Activated CD4-positive, alpha-beta T cell treated with anti-CD3 and anti-CD28 coated beads for 36 hours (primary cell): ENCODE measurements at regions of chr2 and their contacts with region 1.

Region 1: DNA sequence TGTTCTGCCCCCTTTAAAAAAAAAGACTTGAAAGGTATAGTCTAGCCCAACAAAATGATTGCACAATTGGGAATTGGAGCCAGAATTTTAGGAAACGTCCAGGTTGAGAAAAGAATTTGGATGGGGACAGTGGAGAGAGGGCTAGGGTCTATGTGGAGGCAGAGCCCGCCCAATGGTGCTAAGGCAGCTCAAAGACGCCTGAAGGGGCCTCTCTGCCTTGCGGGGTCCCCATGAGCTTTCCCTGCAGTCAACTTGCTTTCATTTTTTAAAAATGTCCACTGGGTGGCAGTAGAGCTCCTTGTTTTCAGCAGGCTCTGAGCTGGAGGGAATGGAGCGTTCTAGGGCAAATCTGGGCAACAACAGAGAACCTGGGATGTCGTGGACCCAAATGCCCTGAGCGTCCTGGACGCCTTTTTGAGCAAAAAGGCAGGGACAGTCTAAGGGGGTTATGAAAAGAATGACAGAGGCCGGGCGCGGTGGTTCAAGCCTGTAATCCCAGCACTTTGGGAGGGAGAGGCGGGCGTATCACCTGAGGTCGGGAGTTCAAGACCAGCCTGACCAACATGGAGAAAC is 40.2 kb upstream of the ITM2C start:
- DNase-seq: peak; percentile 62
- ATAC-seq: peak; percentile 87
- H3K4me3 Mint-ChIP-seq: peak overlapping the region; percentile 44
- H3K27ac Mint-ChIP-seq: no peak overlapping the region
- H3K4me1 Mint-ChIP-seq: peaks cover 5% of the 10 kb centered on the region
- H3K27me3 Mint-ChIP-seq: peaks cover 28% of the 10 kb centered on the region

Region 2: GRCh38 chr2:230842473-230842872 is 18.0 kb after region 1 on chr2:
- CTCF ChIA-PET with region 1: interaction called, 21 read pairs
- POLR2A ChIA-PET with region 1: interaction called, 3 read pairs
- intact Hi-C with region 1: no loop called
- DNase-seq: no peak
- ATAC-seq: no peak
- H3K4me3 Mint-ChIP-seq: no peak overlapping the region
- H3K27ac Mint-ChIP-seq: no peak overlapping the region
- H3K4me1 Mint-ChIP-seq: peaks cover 15% of the 10 kb centered on the region
- H3K27me3 Mint-ChIP-seq: peaks cover 9% of the 10 kb centered on the region

Region 3: DNA sequence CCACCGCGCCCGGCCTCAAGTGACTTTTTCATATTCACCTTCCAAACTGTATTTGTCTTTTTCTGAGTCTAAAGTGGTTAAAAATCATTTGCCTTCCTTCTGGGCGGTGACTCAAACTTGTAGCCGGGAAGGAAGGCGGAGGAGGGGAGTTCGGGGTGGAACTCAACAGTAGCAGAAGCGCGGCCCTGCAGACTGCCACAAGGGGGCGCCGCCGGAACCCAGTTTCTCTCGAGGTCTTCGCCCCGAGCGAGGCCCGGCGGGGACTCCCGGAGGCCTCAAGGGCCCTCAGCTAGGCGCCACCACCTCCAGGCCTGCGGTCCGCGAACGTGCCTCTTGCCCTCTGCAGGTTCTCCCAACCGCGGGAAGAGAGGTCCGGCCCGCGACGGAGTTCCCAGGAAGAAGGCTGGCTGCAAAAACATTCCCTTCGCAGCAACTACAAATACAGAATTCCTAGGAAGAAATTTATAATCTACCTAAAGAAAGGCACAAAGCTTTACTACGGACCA is 23.4 kb after region 1 on chr2:
- CTCF ChIA-PET with region 1: interaction called, 21 read pairs
- POLR2A ChIA-PET with region 1: no interaction called
- intact Hi-C with region 1: loop called (anchors 1 to 2 kb)
- DNase-seq: peak; percentile 98
- ATAC-seq: peak; percentile 97
- H3K4me3 Mint-ChIP-seq: no peak overlapping the region
- H3K27ac Mint-ChIP-seq: peak overlapping the region; percentile 47
- H3K4me1 Mint-ChIP-seq: peaks cover 18% of the 10 kb centered on the region
- H3K27me3 Mint-ChIP-seq: peaks cover 19% of the 10 kb centered on the region

Region 4: DNA sequence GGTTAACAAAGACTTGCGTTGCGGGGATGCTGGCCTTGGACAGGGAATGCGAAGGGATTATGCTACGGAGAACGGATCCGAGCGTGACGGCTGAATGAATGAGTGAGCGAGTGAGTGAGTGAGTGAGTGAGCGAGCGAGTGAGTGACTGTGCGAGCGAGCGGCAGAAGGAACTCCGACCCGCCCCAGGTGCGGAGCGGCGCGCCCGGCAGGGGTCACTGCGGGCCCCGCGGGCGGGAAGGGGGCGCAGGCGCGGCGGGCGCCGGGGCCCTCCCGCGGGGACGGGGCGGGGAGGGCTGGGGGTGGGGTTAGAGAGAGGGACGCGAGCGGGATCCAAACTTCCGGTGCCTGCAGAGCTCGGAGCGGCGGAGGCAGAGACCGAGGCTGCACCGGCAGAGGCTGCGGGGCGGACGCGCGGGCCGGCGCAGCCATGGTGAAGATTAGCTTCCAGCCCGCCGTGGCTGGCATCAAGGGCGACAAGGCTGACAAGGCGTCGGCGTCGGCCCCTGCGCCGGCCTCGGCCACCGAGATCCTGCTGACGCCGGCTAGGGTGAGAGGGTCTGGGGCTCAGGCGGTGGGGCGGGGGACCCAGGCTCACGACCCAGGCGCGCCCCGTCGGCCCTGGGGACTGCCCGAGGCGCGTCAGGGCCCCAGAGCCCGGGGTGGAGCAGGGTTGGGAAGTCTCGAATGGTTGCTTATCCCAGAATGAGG is 40.3 kb after region 1 on chr2 and contains the start of gene ITM2C:
- CTCF ChIA-PET with region 1: interaction called, 16 read pairs
- POLR2A ChIA-PET with region 1: no interaction called
- intact Hi-C with region 1: no loop called
- DNase-seq: peak; percentile 89
- ATAC-seq: peak; percentile 86
- H3K4me3 Mint-ChIP-seq: peak within 1 kb of the TSS; percentile 84
- H3K27ac Mint-ChIP-seq: peak within 1 kb of the TSS; percentile 82
- H3K4me1 Mint-ChIP-seq: peaks cover 50% of the 10 kb centered on the region
- H3K27me3 Mint-ChIP-seq: peaks cover 5% of the 10 kb centered on the region
- total RNA-seq, gene ITM2C: 29.6 to 32.9 TPM

Region 5: DNA sequence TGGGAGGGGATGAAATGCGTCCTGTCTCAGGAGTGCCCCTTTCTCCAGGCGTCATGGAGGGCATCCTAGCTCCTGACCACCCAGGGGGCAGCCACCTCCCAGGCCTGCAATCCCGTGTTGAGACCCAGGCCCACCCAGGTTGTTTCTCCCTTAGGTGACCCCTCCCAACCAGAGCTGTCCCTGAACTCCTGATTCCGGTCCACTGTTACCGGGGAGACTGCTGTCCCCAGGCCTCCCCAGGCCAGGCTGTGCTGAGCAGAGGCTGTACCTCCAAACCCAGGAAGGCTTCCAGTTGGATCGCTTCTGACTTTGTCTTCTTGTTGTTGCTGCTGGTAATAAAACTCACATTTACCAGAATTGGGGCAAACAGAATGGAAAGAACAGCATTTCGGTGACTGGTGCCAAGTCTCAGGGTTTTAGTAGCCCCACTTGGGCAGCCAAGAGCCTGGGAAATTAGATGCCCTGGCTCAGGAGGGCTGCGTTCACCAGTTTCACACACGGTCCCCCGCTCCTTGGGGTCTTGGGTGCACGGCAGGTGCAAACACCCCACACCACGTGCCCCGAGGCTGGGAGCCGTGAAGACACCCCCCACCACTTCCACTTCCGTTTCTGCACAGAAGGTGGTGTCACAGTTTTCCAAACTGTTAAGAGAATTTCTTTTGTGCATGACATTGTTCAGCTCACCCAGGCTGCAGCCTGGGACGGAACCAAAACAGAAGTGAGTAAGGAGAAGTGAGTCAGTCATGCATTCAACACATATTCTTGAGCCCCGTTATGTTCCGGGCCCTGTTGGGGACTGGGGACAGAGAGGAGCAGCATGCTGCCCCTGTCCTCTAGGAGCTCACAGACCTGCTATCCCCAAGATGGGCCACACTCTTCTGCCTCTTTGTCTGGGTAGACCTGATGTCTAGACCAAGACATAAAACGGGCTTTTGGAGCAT is 69.6 kb after region 1 on chr2:
- CTCF ChIA-PET with region 1: interaction called, 12 read pairs
- POLR2A ChIA-PET with region 1: no interaction called
- intact Hi-C with region 1: no loop called
- DNase-seq: no peak
- ATAC-seq: peak; percentile 68
- H3K4me3 Mint-ChIP-seq: no peak overlapping the region
- H3K27ac Mint-ChIP-seq: no peak overlapping the region
- H3K4me1 Mint-ChIP-seq: peaks cover 16% of the 10 kb centered on the region
- H3K27me3 Mint-ChIP-seq: peaks cover 10% of the 10 kb centered on the region